ENCODE measurements at regions of chr20 and their contacts with region 1.

Region 1: GRCh38 chr20:35575970-35576623 is 34.2 kb downstream of the ERGIC3 start:
- DNase-seq: peak; percentile 88 to 95
- H3K4me3 ChIP-seq: peak overlapping the region; percentile 32; the same call in 1 of the 2 replicates
- H3K27ac ChIP-seq: peak overlapping the region; percentile 91
- H3K4me1 ChIP-seq: peaks cover 44% of the 10 kb centered on the region
- H3K27me3 ChIP-seq: no peaks in the 10 kb centered on the region
- CTCF ChIP-seq: no peak

Region 2: GRCh38 chr20:35561268-35561667 is 14.8 kb before region 1 on chr20:
- CTCF ChIA-PET with region 1: no interaction called
- POLR2A ChIA-PET with region 1: interaction called, 14 read pairs
- intact Hi-C with region 1: no loop called
- DNase-seq: peak; percentile 61 to 77
- H3K4me3 ChIP-seq: no peak overlapping the region
- H3K27ac ChIP-seq: peak overlapping the region; percentile 70
- H3K4me1 ChIP-seq: peaks cover 32% of the 10 kb centered on the region
- H3K27me3 ChIP-seq: no peaks in the 10 kb centered on the region
- CTCF ChIP-seq: peak; percentile 61; the same call in 1 of the 2 replicates

Region 3: DNA sequence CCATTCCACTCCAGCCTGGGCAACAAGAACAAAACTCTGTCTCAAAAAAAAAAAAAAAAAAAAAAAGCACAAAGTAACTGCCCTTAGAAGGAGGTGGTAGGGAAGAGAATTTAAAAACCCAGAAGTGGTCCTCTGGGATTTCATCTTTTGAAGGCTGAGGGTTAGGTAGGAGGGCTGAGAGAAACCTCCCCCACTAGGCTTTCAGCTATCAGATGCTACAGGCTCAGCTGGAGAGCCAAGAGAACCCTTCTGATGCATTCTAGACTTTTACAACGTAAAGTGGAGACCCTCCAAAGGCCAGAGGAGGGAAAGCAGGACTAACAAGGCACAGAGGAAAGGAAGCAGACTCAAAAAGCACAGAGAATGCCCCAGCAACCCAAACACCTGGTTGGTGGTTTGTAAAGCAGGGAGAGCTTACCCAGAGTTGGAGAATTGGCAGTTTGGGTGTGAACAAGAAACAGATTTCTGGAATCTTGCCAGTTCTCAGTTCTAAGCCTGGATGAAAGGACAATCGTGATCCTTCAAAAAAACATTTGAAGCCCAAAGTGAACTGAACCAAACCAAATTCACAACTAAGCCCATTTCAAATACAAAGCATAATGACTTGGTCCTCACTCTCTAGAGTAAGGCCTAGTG is 16.4 kb after region 1 on chr20:
- CTCF ChIA-PET with region 1: no interaction called
- POLR2A ChIA-PET with region 1: interaction called, 13 read pairs
- intact Hi-C with region 1: no loop called
- DNase-seq: no peak
- H3K4me3 ChIP-seq: no peak overlapping the region
- H3K27ac ChIP-seq: no peak overlapping the region
- H3K4me1 ChIP-seq: 0 out of 2 replicates have a peak, but pooled peaks cover 3% of the 10 kb centered on the region
- H3K27me3 ChIP-seq: no peaks in the 10 kb centered on the region
- CTCF ChIP-seq: no peak

Region 4: DNA sequence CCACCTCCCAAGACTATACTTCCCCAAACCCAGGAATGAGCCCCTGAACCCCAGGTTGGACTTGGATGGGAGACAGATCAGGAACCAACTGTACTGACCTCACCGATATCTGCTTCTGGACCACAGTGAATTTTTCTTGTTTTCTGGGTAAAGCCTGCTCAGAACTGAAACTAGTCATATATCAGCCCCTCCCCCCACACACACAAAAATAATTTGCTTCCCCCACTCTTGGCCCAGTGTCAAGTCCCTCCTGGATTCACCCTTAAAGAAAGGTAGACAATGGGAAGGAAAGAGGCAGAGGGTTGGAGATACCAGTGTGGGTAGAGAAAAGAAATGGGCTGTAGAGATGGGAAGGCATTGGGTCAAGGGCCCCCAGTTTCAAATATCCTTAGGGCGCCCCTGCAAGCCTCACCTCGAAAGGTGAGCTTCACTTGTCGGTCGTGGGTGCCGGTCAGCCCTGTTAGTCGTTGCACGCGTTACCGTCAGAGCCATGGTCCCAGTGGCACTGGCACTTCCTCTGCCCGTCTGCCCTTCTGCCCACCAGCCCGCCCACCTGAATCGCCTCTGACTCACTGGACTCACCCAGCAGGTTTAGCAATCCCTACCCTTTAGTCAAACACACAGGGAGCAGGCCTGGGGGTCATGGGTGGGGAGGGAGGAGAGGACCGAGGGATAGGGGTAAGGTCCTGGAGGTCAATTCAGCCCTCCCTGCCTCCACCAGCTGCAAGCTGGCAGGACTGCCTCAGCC is 31.1 kb after region 1 on chr20:
- CTCF ChIA-PET with region 1: no interaction called
- POLR2A ChIA-PET with region 1: interaction called, 21 read pairs
- intact Hi-C with region 1: loop called (anchors 2 kb)
- DNase-seq: peak; percentile 88 to 90
- H3K4me3 ChIP-seq: peak overlapping the region; percentile 57; the same call in 1 of the 2 replicates
- H3K27ac ChIP-seq: peak overlapping the region; percentile 57
- H3K4me1 ChIP-seq: peaks cover 39% of the 10 kb centered on the region
- H3K27me3 ChIP-seq: no peaks in the 10 kb centered on the region
- CTCF ChIP-seq: no peak